B cell (primary cell): ENCODE measurements at regions of chr7 and their contacts with region 1.

Region 1: DNA sequence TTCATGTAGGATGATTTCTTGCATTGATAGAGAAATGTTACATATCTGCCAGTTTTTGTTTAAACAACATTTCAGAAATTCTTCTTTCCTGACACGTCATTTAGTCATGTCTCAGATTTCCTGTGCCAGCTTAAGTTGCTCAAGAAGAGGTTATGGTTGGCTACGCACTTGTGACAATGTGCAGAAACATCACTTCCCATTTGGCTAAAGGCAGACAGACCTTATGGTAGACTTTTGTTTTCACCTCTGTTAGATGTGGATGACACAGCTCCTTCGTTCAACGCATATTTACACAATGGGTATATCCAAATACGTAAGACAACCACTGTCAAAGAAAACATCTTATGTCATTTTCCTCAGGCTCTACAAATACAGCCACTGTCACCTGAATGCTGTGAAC is 125.8 kb downstream of the DOCK4 start:
- DNase-seq: peak; percentile 68
- ATAC-seq: peak; percentile 82
- H3K4me3 ChIP-seq: peak overlapping the region in 2 of 5 experiments; percentile 2 to 40
- H3K4me3 Mint-ChIP-seq: peak overlapping the region; percentile 73
- H3K27ac ChIP-seq: peak overlapping the region in 1 of 2 donors; percentile 2
- H3K27ac Mint-ChIP-seq: peak overlapping the region; percentile 51
- H3K4me1 ChIP-seq: peaks cover 27 to 36% of the 10 kb centered on the region in 2 donors
- H3K4me1 Mint-ChIP-seq: peaks cover 44% of the 10 kb centered on the region
- H3K27me3 ChIP-seq: no peaks in the 10 kb centered on the region
- H3K27me3 Mint-ChIP-seq: no peaks in the 10 kb centered on the region
- CTCF ChIP-seq: no peak

Region 2: DNA sequence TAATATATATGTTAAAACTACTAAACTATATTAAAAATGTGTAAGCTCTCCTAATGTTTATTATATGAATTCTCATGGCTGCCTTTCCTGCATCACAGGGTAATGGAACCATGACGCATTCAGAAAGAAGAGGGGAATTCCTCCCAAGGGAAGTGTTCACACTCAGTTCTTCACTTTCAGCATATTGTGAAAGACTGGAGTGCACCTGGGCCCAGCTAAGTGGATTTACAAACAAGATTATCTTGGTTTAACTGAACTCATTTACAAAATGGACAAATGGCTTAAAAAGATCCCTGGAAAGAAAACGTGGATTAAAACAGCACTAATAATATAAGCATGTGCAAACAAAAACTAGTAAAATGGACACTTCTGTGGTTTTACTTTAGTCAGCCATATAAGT is 24.0 kb before region 1 on chr7:
- CTCF ChIA-PET with region 1: no interaction called
- POLR2A ChIA-PET with region 1: no interaction called
- intact Hi-C with region 1: loop called (anchors 2 kb)
- DNase-seq: no peak
- ATAC-seq: no peak
- H3K4me3 ChIP-seq: no peak overlapping the region
- H3K4me3 Mint-ChIP-seq: no peak overlapping the region
- H3K27ac ChIP-seq: no peak overlapping the region
- H3K27ac Mint-ChIP-seq: no peak overlapping the region
- H3K4me1 ChIP-seq: no peaks in the 10 kb centered on the region
- H3K4me1 Mint-ChIP-seq: peaks cover 3% of the 10 kb centered on the region
- H3K27me3 ChIP-seq: no peaks in the 10 kb centered on the region
- H3K27me3 Mint-ChIP-seq: peaks cover 5% of the 10 kb centered on the region
- CTCF ChIP-seq: no peak